ENCODE measurements at regions of chr17 and their contacts with region 1.

Region 1: DNA sequence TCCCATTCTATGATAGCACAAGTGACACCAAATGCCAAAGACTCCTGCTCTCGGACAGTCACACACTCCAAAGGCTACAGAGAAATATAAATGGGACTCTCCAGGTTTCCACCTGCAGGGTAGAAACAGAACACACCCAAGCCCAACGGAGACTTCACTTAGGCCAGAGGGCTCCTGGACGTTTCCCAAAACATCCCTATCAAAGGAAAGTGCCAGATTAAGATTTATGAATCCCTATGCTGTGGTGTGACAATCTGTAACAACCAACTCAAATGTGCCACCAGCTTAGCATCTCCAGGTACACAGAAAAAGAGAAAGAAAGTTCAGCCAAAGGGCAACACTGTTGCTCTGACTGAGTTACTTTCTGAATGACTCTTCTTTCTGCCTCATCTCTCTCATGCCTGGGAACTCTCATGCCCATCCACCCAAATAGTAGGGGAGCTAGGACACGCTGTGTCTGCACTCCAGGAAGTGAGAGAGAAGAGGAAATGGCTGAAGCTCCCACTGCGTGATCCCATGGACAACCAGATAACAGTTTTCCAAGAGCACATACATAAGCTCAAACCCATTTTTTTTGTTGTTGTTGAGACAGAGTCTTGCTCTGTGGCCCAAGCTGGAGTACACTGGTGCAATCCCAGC is 49.7 kb downstream of the SMG6 start:
- DNase-seq: peak; percentile 63
- H3K4me3 Mint-ChIP-seq: peak overlapping the region; percentile 53
- H3K27ac Mint-ChIP-seq: peak overlapping the region; percentile 90
- H3K4me1 Mint-ChIP-seq: peaks cover 63% of the 10 kb centered on the region
- H3K27me3 Mint-ChIP-seq: no peaks in the 10 kb centered on the region

Region 2: GRCh38 chr17:2029911-2030778 is 223.7 kb before region 1 on chr17 and contains the start of gene DPH1:
- CTCF ChIA-PET with region 1: no interaction called
- POLR2A ChIA-PET with region 1: no interaction called
- intact Hi-C with region 1: no loop called
- DNase-seq: peak; percentile 92
- H3K4me3 Mint-ChIP-seq: peak within 1 kb of the TSS; percentile 95
- H3K27ac Mint-ChIP-seq: peak within 1 kb of the TSS; percentile 67
- H3K4me1 Mint-ChIP-seq: peaks cover 15% of the 10 kb centered on the region
- H3K27me3 Mint-ChIP-seq: peaks cover 22% of the 10 kb centered on the region
- total RNA-seq, gene DPH1: 29.4 to 31.1 TPM

Region 3: DNA sequence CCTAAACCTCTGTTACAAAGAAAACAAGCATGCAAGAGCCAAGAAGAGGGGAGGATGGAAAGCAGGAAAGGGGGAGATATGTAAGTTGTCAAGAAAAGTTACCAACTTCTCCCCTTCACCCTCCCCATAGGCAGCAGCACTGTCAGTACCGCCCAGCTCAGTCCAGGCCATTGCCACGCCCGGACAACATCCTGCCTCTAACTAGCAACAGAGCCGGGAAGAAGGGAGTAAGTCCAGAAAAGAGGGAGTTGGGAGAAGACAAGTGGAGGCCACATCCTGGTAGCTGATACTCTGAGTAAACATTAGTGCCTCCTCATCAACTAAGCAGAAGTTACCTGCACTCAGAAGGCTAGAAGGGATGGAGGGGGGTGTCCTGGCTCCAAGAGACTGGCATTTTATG is 63.9 kb before region 1 on chr17:
- CTCF ChIA-PET with region 1: no interaction called
- POLR2A ChIA-PET with region 1: no interaction called
- intact Hi-C with region 1: no loop called
- DNase-seq: no peak
- H3K4me3 Mint-ChIP-seq: no peak overlapping the region
- H3K27ac Mint-ChIP-seq: no peak overlapping the region
- H3K4me1 Mint-ChIP-seq: peaks cover 43% of the 10 kb centered on the region
- H3K27me3 Mint-ChIP-seq: no peaks in the 10 kb centered on the region

Region 4: DNA sequence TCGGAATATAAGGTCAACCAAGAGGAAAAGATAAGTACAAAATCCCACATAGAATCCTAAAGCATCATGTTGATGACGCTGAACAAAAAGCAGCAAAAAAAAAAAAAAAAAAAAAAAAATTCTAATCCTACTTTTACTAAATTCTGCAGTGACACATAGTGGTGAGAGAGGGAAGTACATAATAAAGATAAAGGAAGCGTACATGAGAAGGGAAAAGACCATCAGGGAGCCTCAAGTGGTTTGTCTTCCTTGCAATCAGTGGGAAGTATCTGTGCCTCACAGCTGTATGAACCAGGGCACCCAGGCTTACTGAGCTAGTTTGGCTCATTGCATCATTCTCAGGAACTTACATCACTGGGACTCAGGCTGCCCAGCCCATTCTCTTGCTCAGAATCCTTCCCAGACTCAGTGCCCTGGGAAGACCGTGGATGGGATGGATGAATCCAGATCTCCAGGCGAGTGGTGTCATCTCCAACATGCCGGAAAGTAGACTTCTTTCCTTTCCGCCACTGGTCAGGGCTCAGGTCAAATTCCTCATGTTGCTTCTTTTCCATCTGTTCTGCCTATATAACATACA is 28.5 kb after region 1 on chr17:
- CTCF ChIA-PET with region 1: interaction called, 10 read pairs
- POLR2A ChIA-PET with region 1: interaction called, 4 read pairs
- intact Hi-C with region 1: no loop called
- DNase-seq: no peak
- H3K4me3 Mint-ChIP-seq: no peak overlapping the region
- H3K27ac Mint-ChIP-seq: peak overlapping the region; percentile 33
- H3K4me1 Mint-ChIP-seq: peaks cover 12% of the 10 kb centered on the region
- H3K27me3 Mint-ChIP-seq: no peaks in the 10 kb centered on the region

Region 5: DNA sequence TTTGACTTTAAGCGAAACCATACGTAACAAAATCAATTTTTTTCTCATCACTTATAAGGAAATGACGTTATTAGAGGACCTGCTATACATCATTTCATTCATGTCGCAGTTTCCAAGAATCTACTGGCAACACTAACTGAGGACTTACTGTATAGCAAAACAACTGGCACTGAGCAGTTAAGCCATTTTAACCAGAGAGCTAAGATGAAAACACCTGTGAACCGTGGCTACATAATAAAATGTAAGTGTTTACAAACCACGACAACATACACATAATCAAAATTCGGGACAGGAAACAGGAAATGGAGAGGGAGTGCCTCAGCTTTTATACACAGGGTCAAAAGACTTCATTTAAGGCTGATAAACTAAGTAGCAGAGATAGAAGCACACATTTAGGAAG is 228.3 kb after region 1 on chr17:
- CTCF ChIA-PET with region 1: no interaction called
- POLR2A ChIA-PET with region 1: no interaction called
- intact Hi-C with region 1: no loop called
- DNase-seq: no peak
- H3K4me3 Mint-ChIP-seq: peak overlapping the region; percentile 55
- H3K27ac Mint-ChIP-seq: peak overlapping the region; percentile 75
- H3K4me1 Mint-ChIP-seq: peaks cover 34% of the 10 kb centered on the region
- H3K27me3 Mint-ChIP-seq: no peaks in the 10 kb centered on the region

Measured in activated CD4-positive, alpha-beta memory T cell treated with anti-CD3 and anti-CD28 coated beads for 36 hours (primary cell).